T-cell (primary cell): ENCODE measurements at regions of chr17 and their contacts with region 1.

Region 1: DNA sequence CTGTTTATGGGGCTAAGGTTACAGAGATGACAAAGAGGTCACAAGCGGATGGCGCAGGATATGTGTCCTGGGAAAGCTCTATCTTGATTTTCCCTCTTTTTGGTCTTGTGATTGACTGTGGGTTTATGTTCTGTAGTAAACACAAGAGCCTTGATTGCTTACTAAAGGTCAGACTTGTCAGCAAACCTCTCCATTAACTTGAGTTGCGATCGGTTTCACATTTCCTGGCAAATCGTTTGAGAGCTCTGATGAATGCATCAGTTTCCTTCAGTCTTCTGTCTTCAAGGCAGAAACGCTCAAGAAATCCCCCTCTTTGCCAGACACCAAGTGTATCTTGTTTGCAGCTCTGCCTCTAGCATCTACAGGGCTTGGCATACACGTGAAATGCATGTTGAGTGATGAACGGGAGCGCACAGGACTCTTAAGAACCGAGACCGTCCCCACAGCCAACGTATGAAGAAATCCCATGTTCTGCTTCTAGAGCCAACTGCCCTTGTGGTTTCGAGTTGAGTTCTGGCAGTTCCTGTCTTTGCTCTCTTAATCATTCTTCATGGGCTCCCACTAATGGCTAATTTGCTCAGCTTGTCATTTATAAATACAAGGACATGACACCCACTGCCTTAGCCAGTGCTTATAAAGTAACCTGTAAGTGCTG is 143.3 kb downstream of the PITPNC1 start:
- DNase-seq: peak in 2 of 35 experiments; percentile 14 to 21
- ATAC-seq: peak in 2 of 4 experiments; percentile 23 to 46
- H3K4me3 ChIP-seq: no peak overlapping the region
- H3K4me3 Mint-ChIP-seq: peak overlapping the region in 2 of 3 donors; percentile 4 to 56
- H3K27ac ChIP-seq: peak overlapping the region; percentile 8
- H3K27ac Mint-ChIP-seq: peak overlapping the region; percentile 76 to 89
- H3K4me1 ChIP-seq: peaks cover 9 to 13% of the 10 kb centered on the region in 2 experiments
- H3K4me1 Mint-ChIP-seq: peaks cover 63 to 73% (median 72%) of the 10 kb centered on the region in 3 donors
- H3K27me3 ChIP-seq: no peaks in the 10 kb centered on the region
- H3K27me3 Mint-ChIP-seq: no peaks in the 10 kb centered on the region

Region 2: DNA sequence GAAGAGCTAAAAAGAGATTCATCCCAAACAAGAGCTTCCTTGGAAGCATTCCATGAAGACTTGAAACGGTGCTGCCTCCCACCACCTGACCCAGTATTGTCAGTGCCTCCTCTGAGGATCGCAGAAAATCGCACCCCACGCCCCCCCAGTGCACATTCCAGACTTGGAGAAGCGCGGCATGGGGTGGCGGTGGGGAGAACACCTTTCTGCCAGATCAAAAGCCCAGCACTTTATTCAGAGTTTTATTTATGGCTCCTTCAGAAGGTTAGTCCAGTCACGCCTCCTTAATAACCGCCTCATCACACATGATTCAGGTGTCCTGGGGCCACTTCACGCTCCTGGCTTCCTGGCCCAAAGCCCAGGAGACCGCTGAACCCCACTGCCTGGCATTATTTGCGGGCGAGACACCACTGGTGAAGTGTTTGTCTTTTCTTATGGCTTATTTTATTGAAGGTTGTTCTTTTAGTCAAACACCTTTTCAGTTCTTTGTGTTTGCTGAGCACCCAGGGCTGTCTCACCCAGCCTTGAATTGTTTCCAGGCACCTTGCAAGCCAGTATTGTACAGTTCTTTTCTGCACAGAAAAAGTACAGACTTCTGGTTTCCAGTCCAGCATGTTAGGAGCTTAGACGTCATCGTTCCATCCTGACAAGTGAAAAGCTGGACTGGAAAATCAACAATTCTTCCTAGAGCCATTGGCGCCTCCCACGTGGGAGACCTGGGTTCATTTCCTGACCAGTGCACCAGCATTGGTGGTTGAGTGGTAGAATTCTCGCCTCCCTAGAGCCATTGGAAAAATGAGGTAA is 765.1 kb before region 1 on chr17:
- CTCF ChIA-PET with region 1: interaction called in 1 of 2 experiments, 10 read pairs
- POLR2A ChIA-PET with region 1: no interaction called
- DNase-seq: no peak
- ATAC-seq: no peak
- H3K4me3 ChIP-seq: no peak overlapping the region
- H3K4me3 Mint-ChIP-seq: no peak overlapping the region
- H3K27ac ChIP-seq: no peak overlapping the region
- H3K27ac Mint-ChIP-seq: no peak overlapping the region
- H3K4me1 ChIP-seq: no peaks in the 10 kb centered on the region
- H3K4me1 Mint-ChIP-seq: peaks cover 0 to 6% (median 0%) of the 10 kb centered on the region in 3 donors
- H3K27me3 ChIP-seq: no peaks in the 10 kb centered on the region
- H3K27me3 Mint-ChIP-seq: no peaks in the 10 kb centered on the region

Region 3: GRCh38 chr17:66799849-66800537 is 720.4 kb before region 1 on chr17:
- CTCF ChIA-PET with region 1: no interaction called
- POLR2A ChIA-PET with region 1: no interaction called
- DNase-seq: no peak
- ATAC-seq: no peak
- H3K4me3 ChIP-seq: no peak overlapping the region
- H3K4me3 Mint-ChIP-seq: no peak overlapping the region
- H3K27ac ChIP-seq: no peak overlapping the region
- H3K27ac Mint-ChIP-seq: no peak overlapping the region
- H3K4me1 ChIP-seq: peaks cover 0 to 2% of the 10 kb centered on the region in 2 experiments
- H3K4me1 Mint-ChIP-seq: peaks cover 4 to 8% (median 5%) of the 10 kb centered on the region in 3 donors
- H3K27me3 ChIP-seq: no peaks in the 10 kb centered on the region
- H3K27me3 Mint-ChIP-seq: no peaks in the 10 kb centered on the region

Region 4: GRCh38 chr17:67336859-67337258 is 183.5 kb before region 1 on chr17:
- CTCF ChIA-PET with region 1: interaction called in 1 of 2 experiments, 10 read pairs
- POLR2A ChIA-PET with region 1: no interaction called
- DNase-seq: no peak
- ATAC-seq: no peak
- H3K4me3 ChIP-seq: no peak overlapping the region
- H3K4me3 Mint-ChIP-seq: no peak overlapping the region
- H3K27ac ChIP-seq: no peak overlapping the region
- H3K27ac Mint-ChIP-seq: no peak overlapping the region
- H3K4me1 ChIP-seq: no peaks in the 10 kb centered on the region
- H3K4me1 Mint-ChIP-seq: no peaks in the 10 kb centered on the region
- H3K27me3 ChIP-seq: no peaks in the 10 kb centered on the region
- H3K27me3 Mint-ChIP-seq: no peaks in the 10 kb centered on the region